ENCODE measurements at regions of chr22 and their contacts with region 1.

Region 1: GRCh38 chr22:37316875-37317371 is 34.6 kb downstream of the CYTH4 start:
- DNase-seq: peak; percentile 63 to 97 (median 79)

Region 2: GRCh38 chr22:37244114-37244921 is 72.6 kb before region 1 on chr22 and contains the start of gene RAC2:
- intact Hi-C with region 1: no loop called
- DNase-seq: peak in 5 of 10 donors; percentile 26 to 90 (median 36)

Region 3: DNA sequence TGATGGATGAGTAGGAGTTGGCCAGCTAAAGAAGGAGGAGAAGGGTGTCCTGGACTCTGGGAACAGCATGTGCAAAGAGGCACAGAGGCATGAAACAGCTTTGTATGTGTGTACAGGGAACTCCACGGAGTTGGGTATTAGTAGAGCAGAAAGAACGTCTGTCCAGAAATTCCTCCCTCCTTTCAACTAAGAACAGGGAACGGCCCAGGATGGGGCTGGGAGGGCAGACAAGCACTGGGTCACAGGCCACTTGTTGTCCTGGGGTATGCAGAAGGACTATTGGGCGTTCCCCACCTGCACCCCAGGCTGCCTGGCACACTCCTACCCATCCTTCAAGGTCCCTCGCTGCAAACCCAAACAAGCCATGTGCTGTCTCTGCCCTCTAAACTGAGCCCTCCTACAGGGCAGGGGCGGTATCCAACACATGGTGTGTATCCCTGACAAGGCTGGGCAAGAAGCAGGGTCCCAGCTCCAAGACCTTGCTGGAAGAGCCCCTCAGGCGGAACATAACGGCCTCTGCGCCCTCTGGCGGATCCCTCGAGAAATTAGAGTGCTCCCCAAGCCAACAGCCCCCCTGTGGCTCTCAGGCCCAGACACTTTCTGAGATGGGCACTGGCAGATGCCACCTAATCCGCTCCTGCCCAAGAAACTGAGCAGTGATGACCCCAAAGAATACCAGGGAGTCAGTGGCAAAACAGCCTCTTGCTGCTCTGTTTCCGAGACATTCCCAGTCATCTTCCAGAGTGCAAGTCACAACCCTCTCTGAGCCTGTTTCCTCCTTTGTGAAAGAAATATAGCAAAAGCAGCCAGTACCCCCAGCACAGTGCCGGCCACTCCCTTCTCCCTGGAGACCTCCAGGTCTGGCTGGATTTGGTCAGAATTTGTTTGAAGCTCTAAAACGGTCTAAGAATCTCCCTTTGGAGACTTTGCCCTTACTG is 112.0 kb after region 1 on chr22:
- intact Hi-C with region 1: loop called (anchors 5 kb)
- DNase-seq: peak in 4 of 10 donors; percentile 54 to 88 (median 74)

Region 4: GRCh38 chr22:37457093-37457893 is 140.4 kb after region 1 on chr22:
- intact Hi-C with region 1: loop called (anchors 1 kb)
- DNase-seq: peak; percentile 55 to 95 (median 79)

Region 5: DNA sequence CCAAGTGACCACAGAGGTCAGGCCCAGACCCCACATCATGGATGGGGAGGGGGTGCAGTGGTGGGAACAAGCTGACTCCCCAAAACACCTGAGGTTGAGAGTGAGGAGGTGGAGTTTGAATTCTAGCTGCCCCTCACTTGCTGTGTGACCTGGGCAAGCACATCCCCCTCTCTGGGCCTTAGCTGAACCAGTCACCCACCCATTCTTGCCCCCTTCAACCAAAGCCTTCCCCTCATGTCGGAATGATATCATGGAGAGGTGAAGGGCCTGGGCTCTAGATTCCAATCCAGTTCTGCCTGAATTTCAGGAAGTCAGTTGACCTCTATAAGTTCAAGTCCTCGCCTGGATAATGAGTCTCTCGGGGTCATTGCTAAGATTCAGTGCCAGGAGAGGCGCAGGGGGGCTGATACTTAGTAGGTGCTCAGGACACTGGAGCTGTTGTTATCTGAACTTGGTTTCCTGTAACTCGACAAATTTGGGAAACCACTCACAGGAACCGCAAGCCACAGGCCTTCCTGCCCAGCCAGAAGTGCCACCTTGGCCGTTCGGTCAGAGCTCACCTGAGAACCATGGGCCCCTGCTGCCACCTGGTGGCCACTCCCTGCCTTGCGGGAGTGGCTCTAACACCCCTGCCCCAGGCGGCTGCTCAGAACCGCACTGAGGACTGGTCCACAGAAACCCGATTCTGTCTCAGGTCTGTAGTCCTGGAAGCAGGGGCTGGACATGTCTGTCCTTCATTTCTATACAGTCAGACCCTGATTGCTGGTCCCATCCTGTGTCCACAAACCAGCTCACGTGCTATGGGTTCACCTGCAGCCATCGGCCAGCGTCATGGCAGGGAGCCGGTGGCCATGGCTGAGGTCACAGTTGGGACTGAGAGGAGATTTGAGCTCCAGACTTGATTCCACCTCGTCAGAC is 250.2 kb after region 1 on chr22:
- intact Hi-C with region 1: loop called (anchors 10 kb)
- DNase-seq: peak; percentile 55 to 96 (median 84)

Measured in posterior cingulate gyrus (tissue), 11 donors.